Activated CD4-positive, alpha-beta memory T cell treated with anti-CD3 and anti-CD28 coated beads for 36 hours (primary cell): ENCODE measurements at regions of chr2 and their contacts with region 1.

Region 1: DNA sequence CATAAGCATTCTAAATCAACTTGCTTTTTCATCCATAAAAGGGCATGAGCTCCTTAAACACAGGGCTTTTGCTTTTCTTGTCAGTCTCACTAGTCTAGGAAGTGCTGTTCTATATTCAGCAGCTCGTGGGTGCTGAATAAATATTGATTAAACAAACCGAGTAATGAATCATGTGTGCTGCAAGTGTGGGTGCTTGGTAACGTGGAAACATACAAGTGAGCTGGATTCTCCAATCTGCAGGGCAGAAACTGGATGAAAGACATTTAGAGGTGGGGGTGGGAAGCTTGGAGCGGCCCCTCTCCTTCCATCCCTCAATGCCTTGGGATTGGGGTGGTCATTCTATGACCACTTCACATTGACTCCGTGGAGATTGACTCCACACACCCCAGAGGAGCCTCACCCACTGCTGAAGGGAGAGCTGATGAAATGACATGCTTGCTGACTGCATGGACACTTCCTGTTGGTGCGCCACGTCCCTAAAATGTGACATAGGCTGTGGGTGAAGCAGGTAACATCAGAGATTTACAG is 114.6 kb downstream of the DOCK10 start:
- DNase-seq: peak; percentile 83
- H3K4me3 Mint-ChIP-seq: peak overlapping the region; percentile 66
- H3K27ac Mint-ChIP-seq: peak overlapping the region; percentile 96
- H3K4me1 Mint-ChIP-seq: peaks cover 97% of the 10 kb centered on the region
- H3K27me3 Mint-ChIP-seq: no peaks in the 10 kb centered on the region

Region 2: DNA sequence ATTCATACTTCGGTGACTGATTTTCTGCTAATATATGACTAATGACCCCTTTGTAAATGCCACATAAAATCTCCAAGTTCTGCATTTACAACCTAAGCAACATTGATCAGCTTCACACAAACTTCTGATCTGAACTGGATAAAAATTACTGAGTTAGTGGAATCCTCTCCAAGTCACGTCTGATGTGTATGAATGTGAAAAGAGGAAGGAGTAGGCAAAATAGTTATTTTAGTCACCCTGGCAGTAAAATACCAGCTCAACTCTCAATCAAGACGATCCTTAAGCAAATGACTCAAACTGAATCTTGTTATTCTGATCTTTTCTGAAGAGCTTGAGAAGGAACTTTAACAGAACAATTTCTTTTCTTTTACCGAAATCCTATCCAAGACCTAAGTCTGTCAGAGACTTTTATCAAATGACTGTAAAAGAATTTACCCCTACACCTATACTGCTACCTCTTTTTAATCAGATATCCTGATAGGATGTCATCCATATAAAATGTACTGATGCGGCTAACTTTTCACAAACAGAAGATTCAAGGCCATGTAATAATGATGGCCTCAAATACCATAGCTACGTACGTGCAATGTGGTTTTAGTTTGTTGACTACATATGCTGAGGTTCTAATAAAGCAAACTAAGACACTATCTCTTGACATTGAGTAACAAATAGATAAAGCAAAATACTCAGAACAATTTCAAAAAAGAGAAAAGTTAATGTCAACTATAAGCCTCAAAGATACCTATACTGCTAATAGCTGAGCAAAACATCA is 366.3 kb before region 1 on chr2:
- CTCF ChIA-PET with region 1: no interaction called
- POLR2A ChIA-PET with region 1: no interaction called
- intact Hi-C with region 1: loop called (anchors 5 kb)
- DNase-seq: no peak
- H3K4me3 Mint-ChIP-seq: peak overlapping the region; percentile 17
- H3K27ac Mint-ChIP-seq: no peak overlapping the region
- H3K4me1 Mint-ChIP-seq: peaks cover 50% of the 10 kb centered on the region
- H3K27me3 Mint-ChIP-seq: no peaks in the 10 kb centered on the region

Region 3: DNA sequence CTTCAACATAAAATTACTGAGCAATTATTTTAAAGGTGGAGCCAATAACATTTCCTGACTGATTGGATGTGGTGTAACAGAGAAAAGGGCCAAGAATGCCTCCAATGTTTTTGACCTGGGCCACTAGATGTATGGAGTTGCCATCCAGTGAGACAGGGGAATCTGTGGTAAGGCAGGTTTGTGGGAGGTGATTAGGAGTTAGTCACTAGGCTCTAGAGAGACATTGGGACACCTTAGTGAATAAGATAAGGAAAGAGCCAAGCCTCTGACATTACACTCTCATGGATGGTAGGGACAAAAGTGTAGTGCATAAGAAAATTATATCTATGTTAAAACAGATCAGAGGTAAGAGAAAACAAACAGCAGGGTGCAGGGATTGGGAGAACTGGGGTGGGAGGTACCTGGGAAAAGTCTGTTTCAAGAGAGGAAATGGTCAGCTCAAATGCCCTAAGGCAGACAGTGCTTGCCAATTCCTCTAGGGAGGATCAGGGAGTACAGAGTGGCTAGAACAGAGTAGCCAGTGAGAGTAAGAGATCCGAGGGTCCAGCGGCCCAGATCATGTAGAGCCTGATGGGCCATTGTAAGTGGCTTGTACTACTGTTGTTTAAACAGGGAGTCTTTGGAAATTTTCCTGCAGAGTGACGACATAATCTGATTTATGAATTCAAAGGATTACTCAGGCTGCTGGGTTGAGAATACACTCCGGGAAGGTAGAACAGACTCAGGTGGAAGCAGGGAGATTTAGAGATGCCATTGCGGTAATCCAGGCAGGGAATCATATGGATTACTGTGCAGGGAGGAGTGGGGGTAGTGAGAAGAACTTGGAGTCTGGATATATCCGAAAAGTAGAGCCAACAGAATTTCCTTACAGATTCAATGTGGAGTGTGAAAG is 296.8 kb before region 1 on chr2:
- CTCF ChIA-PET with region 1: no interaction called
- POLR2A ChIA-PET with region 1: no interaction called
- intact Hi-C with region 1: no loop called
- DNase-seq: no peak
- H3K4me3 Mint-ChIP-seq: no peak overlapping the region
- H3K27ac Mint-ChIP-seq: no peak overlapping the region
- H3K4me1 Mint-ChIP-seq: no peaks in the 10 kb centered on the region
- H3K27me3 Mint-ChIP-seq: no peaks in the 10 kb centered on the region

Region 4: DNA sequence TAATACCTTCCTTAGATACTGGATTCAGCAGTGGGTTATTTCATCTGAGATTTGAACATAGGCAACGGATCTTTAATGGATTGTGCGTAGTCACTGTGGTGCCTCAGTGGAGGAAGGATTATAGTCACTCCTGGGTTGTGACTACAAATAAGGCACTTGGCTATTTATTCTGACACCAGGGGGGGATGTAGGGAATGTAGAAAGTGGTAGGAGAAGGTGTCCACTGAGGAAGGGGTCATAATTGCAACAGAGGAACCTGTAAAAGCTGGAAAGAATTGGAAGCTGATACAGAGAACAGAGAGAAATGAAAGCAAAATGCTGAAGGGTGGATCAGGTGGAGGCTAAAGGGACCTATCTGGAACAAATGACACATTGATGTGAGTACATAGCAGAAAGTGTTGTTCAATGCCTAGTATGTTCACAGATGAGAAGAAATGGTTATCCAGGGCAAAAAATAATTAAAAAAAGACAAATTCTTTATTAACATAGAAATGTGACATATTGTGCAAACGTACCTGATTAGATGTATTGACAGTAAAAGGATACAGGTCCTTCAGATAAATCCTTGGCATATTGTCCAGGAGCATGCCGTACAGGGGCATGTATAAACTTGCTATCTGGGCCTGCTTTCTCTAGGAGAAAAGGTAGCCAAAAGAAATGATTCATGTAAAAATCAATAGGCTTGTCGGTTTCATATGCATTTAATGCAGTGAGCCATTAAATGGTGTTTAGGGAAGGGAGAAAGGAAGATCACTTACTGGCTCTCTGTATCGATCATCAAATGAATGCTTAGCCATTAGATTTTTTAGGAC is 120.4 kb before region 1 on chr2:
- CTCF ChIA-PET with region 1: no interaction called
- POLR2A ChIA-PET with region 1: no interaction called
- intact Hi-C with region 1: no loop called
- DNase-seq: no peak
- H3K4me3 Mint-ChIP-seq: no peak overlapping the region
- H3K27ac Mint-ChIP-seq: peak overlapping the region; percentile 23
- H3K4me1 Mint-ChIP-seq: no peaks in the 10 kb centered on the region
- H3K27me3 Mint-ChIP-seq: no peaks in the 10 kb centered on the region

Region 5: GRCh38 chr2:224885836-224886547 is 41.7 kb before region 1 on chr2:
- CTCF ChIA-PET with region 1: interaction called, 6 read pairs
- POLR2A ChIA-PET with region 1: interaction called, 5 read pairs
- intact Hi-C with region 1: loop called (anchors 1 kb)
- DNase-seq: peak; percentile 15
- H3K4me3 Mint-ChIP-seq: no peak overlapping the region
- H3K27ac Mint-ChIP-seq: peak overlapping the region; percentile 82
- H3K4me1 Mint-ChIP-seq: peaks cover 72% of the 10 kb centered on the region
- H3K27me3 Mint-ChIP-seq: no peaks in the 10 kb centered on the region

Region 6: DNA sequence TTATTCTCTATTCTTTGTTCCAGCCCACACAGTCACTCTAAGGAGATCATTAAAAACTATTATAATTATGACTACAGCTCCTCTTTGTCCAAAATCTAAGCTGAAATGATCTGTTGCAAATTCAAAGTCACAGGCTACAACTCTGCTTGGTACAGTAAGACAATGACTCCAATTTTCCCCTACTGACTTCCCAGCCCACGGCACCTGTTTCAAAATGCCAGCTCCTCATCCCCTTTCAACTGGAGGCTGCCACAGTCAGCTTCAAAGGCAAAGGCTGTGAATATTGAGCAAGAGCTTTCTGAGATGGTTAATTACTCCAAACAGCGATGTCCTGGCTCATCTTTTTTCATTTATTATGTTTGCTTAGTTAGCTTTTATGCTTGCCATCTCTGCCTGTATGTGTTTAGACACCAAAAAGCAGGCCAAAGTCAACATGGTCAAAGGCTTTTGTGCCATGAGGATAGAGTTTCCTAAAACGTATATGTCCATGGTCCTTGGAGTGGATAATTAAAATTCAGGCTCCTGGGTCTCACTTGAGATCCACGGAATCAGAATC is 26.5 kb before region 1 on chr2:
- CTCF ChIA-PET with region 1: no interaction called
- POLR2A ChIA-PET with region 1: no interaction called
- intact Hi-C with region 1: no loop called
- DNase-seq: peak; percentile 33
- H3K4me3 Mint-ChIP-seq: no peak overlapping the region
- H3K27ac Mint-ChIP-seq: peak overlapping the region; percentile 70
- H3K4me1 Mint-ChIP-seq: peaks cover 50% of the 10 kb centered on the region
- H3K27me3 Mint-ChIP-seq: no peaks in the 10 kb centered on the region

Region 7: GRCh38 chr2:224946895-224947294 is 19.2 kb after region 1 on chr2:
- CTCF ChIA-PET with region 1: interaction called, 29 read pairs
- POLR2A ChIA-PET with region 1: interaction called, 209 read pairs
- intact Hi-C with region 1: loop called (anchors 1 kb)
- DNase-seq: no peak
- H3K4me3 Mint-ChIP-seq: peak overlapping the region; percentile 90
- H3K27ac Mint-ChIP-seq: peak overlapping the region; percentile 95
- H3K4me1 Mint-ChIP-seq: peaks cover 65% of the 10 kb centered on the region
- H3K27me3 Mint-ChIP-seq: no peaks in the 10 kb centered on the region

Region 8: DNA sequence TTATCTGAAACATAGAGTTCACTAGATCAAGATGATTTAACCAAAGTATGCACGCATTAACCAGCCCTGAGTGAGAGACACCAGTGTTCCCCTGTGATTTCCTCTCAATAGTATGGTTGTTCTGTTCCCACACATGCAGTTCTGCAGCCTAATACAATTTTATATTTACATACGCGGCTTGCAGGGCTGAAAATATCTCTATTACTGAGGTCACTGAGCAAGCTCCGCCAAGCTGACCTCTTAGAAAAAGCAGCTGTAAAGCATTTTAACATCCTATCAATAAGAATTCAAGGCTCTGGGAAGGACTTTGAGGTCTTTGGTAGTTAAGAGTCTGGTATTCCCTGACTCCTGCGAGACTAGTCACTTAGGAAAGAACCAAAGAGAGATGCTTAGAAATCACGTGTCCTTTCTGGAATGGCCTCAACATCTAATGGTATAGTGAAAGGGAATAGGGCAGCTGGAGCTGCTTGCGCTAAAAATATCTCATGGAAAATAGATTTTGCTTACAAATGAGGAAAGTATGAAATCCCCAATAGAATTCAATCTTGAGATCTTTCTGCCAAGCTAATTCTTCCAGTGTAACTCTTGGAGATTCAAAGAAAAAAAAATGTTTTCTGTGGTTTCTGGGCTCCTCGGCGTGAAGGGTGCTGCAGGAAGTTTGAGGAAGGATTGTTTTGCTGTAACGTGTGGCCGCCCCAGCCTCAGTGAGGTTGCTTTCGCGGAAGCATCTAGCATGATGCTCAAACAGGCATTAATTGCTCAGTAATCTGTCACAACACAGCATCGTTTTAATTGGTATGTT is 55.4 kb after region 1 on chr2:
- CTCF ChIA-PET with region 1: no interaction called
- POLR2A ChIA-PET with region 1: interaction called, 15 read pairs
- intact Hi-C with region 1: loop called (anchors 2 kb)
- DNase-seq: peak; percentile 58
- H3K4me3 Mint-ChIP-seq: peak overlapping the region; percentile 58
- H3K27ac Mint-ChIP-seq: peak overlapping the region; percentile 71
- H3K4me1 Mint-ChIP-seq: peaks cover 71% of the 10 kb centered on the region
- H3K27me3 Mint-ChIP-seq: no peaks in the 10 kb centered on the region

Region 9: DNA sequence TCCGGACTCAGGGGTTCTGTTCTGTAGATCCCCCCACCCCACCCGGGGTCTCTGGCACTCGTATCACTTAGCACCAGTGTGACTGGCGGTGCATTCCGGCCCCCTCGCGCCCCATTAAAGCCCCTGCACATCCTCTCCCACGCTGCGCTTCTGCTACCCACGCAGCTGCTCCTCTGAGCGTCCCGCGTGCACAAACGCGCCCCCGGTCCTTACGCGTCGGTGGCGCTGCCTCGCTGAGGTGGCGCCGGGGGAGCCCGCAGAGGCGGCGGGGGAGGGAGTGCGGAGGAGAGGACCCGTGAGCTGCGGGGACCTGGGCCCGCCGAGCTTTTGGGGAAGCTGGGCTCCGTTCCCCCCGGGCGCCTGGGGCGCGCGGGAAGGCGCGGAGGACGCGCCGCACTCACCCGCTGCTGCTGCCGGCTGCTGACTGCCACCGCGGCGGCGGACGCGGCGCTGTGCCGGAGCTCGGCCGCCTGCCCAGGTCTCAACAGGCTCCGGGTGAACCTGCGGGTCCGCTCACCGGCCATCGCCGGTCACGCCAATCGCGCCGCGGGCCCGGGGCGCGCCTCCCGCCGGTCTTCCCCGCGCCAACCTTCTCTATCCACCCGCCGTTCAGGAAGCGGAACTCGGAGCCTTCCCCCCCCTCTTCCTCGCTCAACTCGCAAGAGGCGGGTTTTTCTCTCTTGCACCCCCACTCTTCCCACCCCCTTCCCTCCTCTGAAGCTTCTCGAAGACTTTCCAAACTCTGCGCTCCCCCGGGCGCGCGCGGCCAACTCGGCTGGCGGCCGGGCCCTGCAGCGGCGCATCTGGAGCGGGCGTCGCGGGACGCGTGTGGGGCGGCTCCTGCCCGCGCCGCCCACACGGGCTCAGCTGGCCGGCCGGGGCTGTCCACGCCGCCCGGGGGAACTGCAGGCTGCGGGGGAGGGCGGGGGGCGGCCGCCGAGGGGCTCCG is 114.4 kb after region 1 on chr2 and contains the start of gene DOCK10:
- CTCF ChIA-PET with region 1: interaction called, 4 read pairs
- POLR2A ChIA-PET with region 1: interaction called, 11 read pairs
- intact Hi-C with region 1: loop called (anchors 1 kb)
- DNase-seq: peak; percentile 67
- H3K4me3 Mint-ChIP-seq: peak within 1 kb of the TSS; percentile 88
- H3K27ac Mint-ChIP-seq: peak within 1 kb of the TSS; percentile 96
- H3K4me1 Mint-ChIP-seq: peaks cover 44% of the 10 kb centered on the region
- H3K27me3 Mint-ChIP-seq: no peaks in the 10 kb centered on the region
- total RNA-seq, gene DOCK10: 134 to 139 TPM

Region 10: GRCh38 chr2:225112362-225113126 is 184.8 kb after region 1 on chr2:
- CTCF ChIA-PET with region 1: no interaction called
- POLR2A ChIA-PET with region 1: no interaction called
- intact Hi-C with region 1: no loop called
- DNase-seq: no peak
- H3K4me3 Mint-ChIP-seq: no peak overlapping the region
- H3K27ac Mint-ChIP-seq: no peak overlapping the region
- H3K4me1 Mint-ChIP-seq: no peaks in the 10 kb centered on the region
- H3K27me3 Mint-ChIP-seq: no peaks in the 10 kb centered on the region

Region 11: GRCh38 chr2:226835796-226836547 is 1908.3 kb after region 1 on chr2 and contains the start of gene RHBDD1:
- CTCF ChIA-PET with region 1: no interaction called
- POLR2A ChIA-PET with region 1: no interaction called
- intact Hi-C with region 1: loop called (anchors 5 kb)
- DNase-seq: peak; percentile 96
- H3K4me3 Mint-ChIP-seq: peak within 1 kb of the TSS; percentile 92
- H3K27ac Mint-ChIP-seq: peak within 1 kb of the TSS; percentile 99
- H3K4me1 Mint-ChIP-seq: peaks cover 56% of the 10 kb centered on the region
- H3K27me3 Mint-ChIP-seq: no peaks in the 10 kb centered on the region
- total RNA-seq, gene RHBDD1: 38.0 to 41.1 TPM